ENCODE measurements at regions of chr12 and their contacts with region 1.

Region 1: DNA sequence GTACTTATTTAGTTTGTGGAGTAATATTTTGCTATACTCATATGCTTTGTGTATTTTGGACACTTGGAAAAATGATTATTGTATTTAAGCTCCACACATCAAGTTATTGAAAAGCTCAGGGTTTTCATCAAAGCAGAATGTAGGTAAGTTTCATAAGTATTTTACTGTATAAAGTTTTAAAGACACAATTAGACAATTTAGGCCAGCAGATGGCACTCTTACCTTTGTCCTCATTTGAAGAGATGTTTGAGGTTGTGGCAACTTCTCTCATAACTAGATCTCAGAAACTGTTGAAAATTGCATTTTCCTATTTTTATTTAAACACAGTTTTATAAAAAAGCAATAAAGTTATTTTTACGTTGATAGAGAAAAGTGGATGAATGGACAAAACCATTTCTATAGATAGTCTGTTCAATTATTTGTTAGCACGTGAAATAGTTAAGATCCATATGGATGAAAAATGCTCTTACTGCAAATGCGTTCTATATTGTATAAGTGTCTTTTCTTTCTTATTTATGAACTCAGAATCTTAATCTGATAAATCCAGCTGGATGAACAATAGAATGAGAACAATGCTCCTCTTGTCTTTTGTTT is 300.0 kb downstream of the AEBP2 start:
- DNase-seq: no peak
- H3K4me3 Mint-ChIP-seq: no peak overlapping the region
- H3K27ac Mint-ChIP-seq: no peak overlapping the region
- H3K4me1 Mint-ChIP-seq: no peaks in the 10 kb centered on the region
- H3K27me3 Mint-ChIP-seq: peaks cover 1% of the 10 kb centered on the region

Region 2: GRCh38 chr12:19800884-19801283 is 61.6 kb after region 1 on chr12:
- CTCF ChIA-PET with region 1: no interaction called
- POLR2A ChIA-PET with region 1: no interaction called
- intact Hi-C with region 1: no loop called
- DNase-seq: no peak
- H3K4me3 Mint-ChIP-seq: no peak overlapping the region
- H3K27ac Mint-ChIP-seq: peak overlapping the region; percentile 1
- H3K4me1 Mint-ChIP-seq: peaks cover 26% of the 10 kb centered on the region
- H3K27me3 Mint-ChIP-seq: no peaks in the 10 kb centered on the region

Region 3: DNA sequence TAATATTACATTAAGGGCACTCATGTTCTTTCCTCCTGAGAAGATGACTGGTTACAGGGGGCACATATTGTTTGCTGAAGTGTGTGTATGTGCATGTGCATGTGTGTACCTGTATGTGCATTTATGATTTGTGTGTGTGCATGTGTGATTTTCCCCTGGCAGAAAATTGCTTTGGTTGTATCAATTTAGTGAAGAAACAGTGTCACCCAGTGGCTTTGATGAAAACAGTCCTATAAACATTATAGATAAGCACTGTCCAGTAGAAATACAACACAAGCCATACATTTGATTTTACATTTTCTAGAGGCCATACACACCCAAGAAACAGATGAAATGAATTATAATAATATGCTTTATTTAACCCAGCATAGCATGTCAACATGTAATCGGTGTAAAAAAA is 637.7 kb after region 1 on chr12:
- CTCF ChIA-PET with region 1: interaction called, 11 read pairs
- POLR2A ChIA-PET with region 1: no interaction called
- intact Hi-C with region 1: loop called (anchors 2 kb)
- DNase-seq: no peak
- H3K4me3 Mint-ChIP-seq: no peak overlapping the region
- H3K27ac Mint-ChIP-seq: no peak overlapping the region
- H3K4me1 Mint-ChIP-seq: no peaks in the 10 kb centered on the region
- H3K27me3 Mint-ChIP-seq: peaks cover 11% of the 10 kb centered on the region

Measured in activated CD4-positive, alpha-beta memory T cell treated with anti-CD3 and anti-CD28 coated beads for 36 hours (primary cell).